Transverse colon (tissue), 4 donors: ENCODE measurements at regions of chr2 and their contacts with region 1.

Region 1: GRCh38 chr2:38602732-38603401 is at the start of gene HNRNPLL:
- DNase-seq: peak; percentile 99
- H3K4me3 ChIP-seq: peak within 1 kb of the TSS; percentile 69 to 86 (median 82)
- H3K27ac ChIP-seq: peak within 1 kb of the TSS; percentile 97 to 98 (median 98)
- H3K4me1 ChIP-seq: peaks cover 10 to 45% (median 30%) of the 10 kb centered on the region in 4 donors
- H3K27me3 ChIP-seq: no peaks in the 10 kb centered on the region
- CTCF ChIP-seq: no peak
- EP300 ChIP-seq: no peak
- POLR2A ChIP-seq: peak; percentile 97
- total RNA-seq, gene HNRNPLL: 45.2 to 59.7 (median 54.4) TPM

Region 2: GRCh38 chr2:37912056-37912455 is 690.8 kb before region 1 on chr2:
- in situ Hi-C with region 1: no loop called
- intact Hi-C with region 1: no loop called
- DNase-seq: no peak
- H3K4me3 ChIP-seq: no peak overlapping the region
- H3K27ac ChIP-seq: no peak overlapping the region
- H3K4me1 ChIP-seq: peaks cover 0 to 13% (median 6%) of the 10 kb centered on the region in 4 donors
- H3K27me3 ChIP-seq: no peaks in the 10 kb centered on the region
- CTCF ChIP-seq: no peak
- EP300 ChIP-seq: no peak
- POLR2A ChIP-seq: no peak

Region 3: DNA sequence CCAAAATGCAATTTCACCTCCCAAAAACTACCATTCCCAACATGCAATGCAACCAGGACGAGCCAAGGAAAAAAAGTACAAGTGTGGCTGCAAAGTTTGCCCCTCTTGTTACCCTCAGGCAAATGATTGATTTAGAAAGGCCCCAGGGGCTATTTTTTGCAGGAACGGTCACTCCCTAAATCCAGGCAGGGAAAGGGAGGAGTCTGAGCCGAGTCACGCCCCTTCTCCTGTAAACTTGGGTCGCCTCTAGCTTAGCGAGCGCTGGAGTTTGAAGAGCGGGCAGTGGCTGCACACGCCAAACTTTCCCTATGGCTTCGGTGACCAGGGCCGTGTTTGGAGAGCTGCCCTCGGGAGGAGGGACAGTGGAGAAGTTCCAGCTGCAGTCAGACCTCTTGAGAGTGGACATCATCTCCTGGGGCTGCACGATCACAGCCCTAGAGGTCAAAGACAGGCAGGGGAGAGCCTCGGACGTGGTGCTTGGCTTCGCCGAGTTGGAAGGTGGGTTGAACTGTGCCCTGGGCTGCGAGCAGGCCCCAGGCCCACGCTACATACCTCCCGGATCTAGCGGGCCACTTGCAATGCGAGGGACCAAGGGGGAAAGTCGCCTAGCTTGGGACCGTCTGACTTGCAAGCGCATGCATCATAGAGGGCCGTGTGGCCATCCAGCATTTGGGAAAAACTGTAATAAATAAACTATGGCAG is 63.1 kb after region 1 on chr2 and contains the start of gene GALM:
- in situ Hi-C with region 1: loop called in 2 of 4 experiments (anchors 10 kb)
- intact Hi-C with region 1: no loop called
- DNase-seq: peak; percentile 85
- H3K4me3 ChIP-seq: peak within 1 kb of the TSS; percentile 36 to 61 (median 48)
- H3K27ac ChIP-seq: peak within 1 kb of the TSS; percentile 84 to 95 (median 90)
- H3K4me1 ChIP-seq: peaks cover 0 to 42% (median 15%) of the 10 kb centered on the region in 4 donors
- H3K27me3 ChIP-seq: no peaks in the 10 kb centered on the region
- CTCF ChIP-seq: no peak
- EP300 ChIP-seq: no peak
- POLR2A ChIP-seq: peak; percentile 60
- total RNA-seq, gene GALM: 35.5 to 80.6 (median 70.9) TPM

Region 4: DNA sequence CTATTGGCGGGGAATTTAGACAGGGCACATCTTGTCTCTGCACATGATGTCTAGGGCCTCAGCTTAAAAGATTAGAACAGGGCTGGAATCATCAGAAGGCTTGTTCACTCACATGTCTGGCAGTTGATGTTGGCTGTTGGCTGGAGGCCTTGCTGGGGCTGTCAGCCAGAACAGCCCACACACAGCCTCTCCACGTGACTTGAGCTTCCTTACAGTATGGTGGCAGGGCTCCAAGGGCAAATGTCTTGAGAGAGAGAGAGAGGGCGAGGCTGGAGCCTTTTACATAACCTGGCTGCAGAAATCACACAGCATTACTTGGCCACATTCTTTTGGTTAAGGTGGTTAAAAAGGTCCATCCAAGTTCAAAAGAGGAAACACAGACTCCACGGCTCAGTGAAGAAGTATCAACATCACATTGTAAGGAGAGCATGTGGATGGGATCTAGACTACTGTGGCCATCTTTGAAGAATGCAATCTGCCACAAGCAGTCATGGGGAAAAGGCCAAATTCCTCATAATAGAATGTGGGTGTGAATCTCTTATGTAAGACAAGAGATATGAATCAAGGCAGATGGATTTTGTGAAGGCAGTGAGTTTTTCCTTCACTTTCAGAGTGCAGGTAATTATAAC is 117.9 kb after region 1 on chr2:
- in situ Hi-C with region 1: no loop called
- intact Hi-C with region 1: loop called (anchors 10 kb)
- DNase-seq: peak; percentile 45
- H3K4me3 ChIP-seq: no peak overlapping the region
- H3K27ac ChIP-seq: peak overlapping the region in 3 of 4 donors; percentile 23 to 42 (median 32)
- H3K4me1 ChIP-seq: peaks cover 0 to 16% (median 0%) of the 10 kb centered on the region in 4 donors
- H3K27me3 ChIP-seq: no peaks in the 10 kb centered on the region
- CTCF ChIP-seq: no peak
- EP300 ChIP-seq: no peak
- POLR2A ChIP-seq: no peak